T-cell (primary cell): ENCODE measurements at regions of chr1 and their contacts with region 1.

Region 1: GRCh38 chr1:18972531-18972930 is 16.1 kb upstream of the IFFO2 start:
- DNase-seq: peak in 16 of 35 experiments; percentile 9 to 71 (median 30)
- ATAC-seq: peak; percentile 20 to 64 (median 52)
- H3K4me3 ChIP-seq: no peak overlapping the region
- H3K4me3 Mint-ChIP-seq: no peak overlapping the region
- H3K27ac ChIP-seq: no peak overlapping the region
- H3K27ac Mint-ChIP-seq: no peak overlapping the region
- H3K4me1 ChIP-seq: no peaks in the 10 kb centered on the region
- H3K4me1 Mint-ChIP-seq: peaks cover 0 to 5% (median 4%) of the 10 kb centered on the region in 3 donors
- H3K27me3 ChIP-seq: peaks cover 0 to 12% of the 10 kb centered on the region in 2 experiments
- H3K27me3 Mint-ChIP-seq: peaks cover 8 to 18% of the 10 kb centered on the region in 2 donors

Region 2: GRCh38 chr1:18883636-18884418 is 88.7 kb before region 1 on chr1:
- CTCF ChIA-PET with region 1: interaction called, 7 to 17 read pairs
- POLR2A ChIA-PET with region 1: no interaction called
- DNase-seq: peak; percentile 19 to 80 (median 64)
- ATAC-seq: peak; percentile 68 to 75 (median 73)
- H3K4me3 ChIP-seq: no peak overlapping the region
- H3K4me3 Mint-ChIP-seq: no peak overlapping the region
- H3K27ac ChIP-seq: no peak overlapping the region
- H3K27ac Mint-ChIP-seq: no peak overlapping the region
- H3K4me1 ChIP-seq: no peaks in the 10 kb centered on the region
- H3K4me1 Mint-ChIP-seq: no peaks in the 10 kb centered on the region
- H3K27me3 ChIP-seq: no peaks in the 10 kb centered on the region
- H3K27me3 Mint-ChIP-seq: no peaks in the 10 kb centered on the region

Region 3: DNA sequence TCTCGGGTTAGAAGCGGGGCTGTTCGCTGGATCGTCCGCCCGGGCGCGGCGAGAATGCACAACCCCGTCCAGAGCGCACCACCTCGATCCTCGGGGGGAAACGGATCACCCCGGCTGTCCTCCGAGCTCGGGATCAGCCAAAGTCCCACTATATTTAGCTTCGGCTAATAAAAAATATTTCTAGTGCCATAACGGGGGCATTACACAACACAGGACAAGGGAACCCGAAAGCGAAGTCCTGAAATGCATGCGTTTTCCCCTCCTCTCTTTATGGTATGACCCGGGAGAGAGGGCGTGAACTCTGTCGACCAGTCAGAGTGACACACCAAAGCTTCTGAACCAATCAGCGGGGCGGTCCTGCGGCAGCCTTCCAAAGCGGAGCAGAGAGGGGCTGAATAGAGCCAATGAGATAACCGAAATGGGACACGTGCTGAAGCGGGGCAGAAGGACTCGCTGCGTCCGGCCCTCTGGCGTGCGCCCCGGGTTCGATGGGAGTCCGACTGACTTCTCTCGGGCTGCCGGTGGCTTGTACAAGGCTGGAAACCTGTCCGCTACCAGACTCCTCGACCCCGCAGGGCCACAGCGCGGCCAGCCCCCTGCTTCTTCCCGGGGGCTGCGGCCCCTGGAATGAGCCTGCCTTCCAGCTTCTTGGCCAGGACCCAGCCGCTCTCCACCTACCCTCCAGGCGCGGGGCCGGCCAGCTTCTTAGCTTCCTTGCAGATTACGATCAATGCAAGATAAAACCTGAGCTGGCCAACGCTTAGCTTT is 69.8 kb before region 1 on chr1 and contains the start of gene ALDH4A1:
- CTCF ChIA-PET with region 1: interaction called, 11 to 26 read pairs
- POLR2A ChIA-PET with region 1: no interaction called
- DNase-seq: peak; percentile 79 to 97 (median 92)
- ATAC-seq: peak; percentile 95 to 98 (median 97)
- H3K4me3 ChIP-seq: peak within 1 kb of the TSS; percentile 75 to 77
- H3K4me3 Mint-ChIP-seq: peak within 1 kb of the TSS; percentile 88 to 91 (median 88)
- H3K27ac ChIP-seq: peak within 1 kb of the TSS; percentile 75
- H3K27ac Mint-ChIP-seq: peak within 1 kb of the TSS; percentile 96 to 99
- H3K4me1 ChIP-seq: peaks cover 16 to 33% of the 10 kb centered on the region in 2 experiments
- H3K4me1 Mint-ChIP-seq: peaks cover 30 to 47% (median 36%) of the 10 kb centered on the region in 3 donors
- H3K27me3 ChIP-seq: no peaks in the 10 kb centered on the region
- H3K27me3 Mint-ChIP-seq: no peaks in the 10 kb centered on the region
- total RNA-seq, gene ALDH4A1: 0.85 to 2.8 (median 2.2) TPM

Region 4: GRCh38 chr1:18991585-18991984 is 19.1 kb after region 1 on chr1:
- CTCF ChIA-PET with region 1: no interaction called
- POLR2A ChIA-PET with region 1: no interaction called
- DNase-seq: no peak
- ATAC-seq: no peak
- H3K4me3 ChIP-seq: no peak overlapping the region
- H3K4me3 Mint-ChIP-seq: no peak overlapping the region
- H3K27ac ChIP-seq: no peak overlapping the region
- H3K27ac Mint-ChIP-seq: no peak overlapping the region
- H3K4me1 ChIP-seq: no peaks in the 10 kb centered on the region
- H3K4me1 Mint-ChIP-seq: no peaks in the 10 kb centered on the region
- H3K27me3 ChIP-seq: peaks cover 0 to 16% of the 10 kb centered on the region in 2 experiments
- H3K27me3 Mint-ChIP-seq: peaks cover 2 to 5% of the 10 kb centered on the region in 2 donors

Region 5: DNA sequence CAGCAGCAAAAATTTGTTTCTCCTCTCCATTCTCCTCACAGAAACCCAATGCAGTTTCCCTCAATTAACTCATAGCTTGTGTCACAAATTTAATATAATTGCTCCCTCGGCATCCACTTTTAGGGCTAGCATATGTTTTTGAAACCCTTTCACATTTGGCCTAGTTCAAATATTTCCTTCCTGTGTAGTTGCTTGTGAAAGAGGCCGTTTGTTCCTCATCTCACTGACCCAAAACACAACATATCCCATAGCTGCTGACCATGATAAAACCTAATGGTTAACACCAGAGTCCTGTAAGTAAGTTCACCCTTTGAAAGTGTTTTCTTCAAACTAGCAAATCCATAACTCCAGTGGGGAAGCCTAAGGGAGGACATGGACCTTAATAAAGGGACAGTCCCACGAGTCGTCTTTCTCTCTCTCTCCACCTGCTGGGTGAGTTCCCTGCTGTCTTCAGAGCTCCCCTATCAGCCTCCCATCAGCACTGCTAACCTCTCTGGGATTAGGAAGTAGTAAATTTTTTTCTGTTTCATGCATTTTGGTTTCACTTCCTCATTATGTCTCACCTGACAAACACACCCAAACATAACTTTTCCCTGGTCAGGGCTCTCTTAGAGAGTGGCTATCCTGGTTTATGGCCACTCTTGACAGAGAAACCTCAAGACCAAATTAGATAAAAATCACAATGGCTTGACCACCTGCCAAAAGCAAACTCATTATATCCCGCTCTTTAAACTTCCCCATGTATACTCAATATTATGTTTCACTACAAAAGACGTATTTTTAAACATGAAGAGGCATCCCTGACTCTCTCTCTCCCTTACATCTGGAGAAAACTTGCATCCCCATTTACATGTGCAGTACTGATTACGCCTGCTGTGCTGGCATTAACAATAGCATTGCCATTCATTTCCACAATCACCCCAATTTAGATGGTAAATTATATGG is 1992.3 kb after region 1 on chr1:
- CTCF ChIA-PET with region 1: no interaction called
- POLR2A ChIA-PET with region 1: no interaction called
- DNase-seq: no peak
- ATAC-seq: no peak
- H3K4me3 ChIP-seq: no peak overlapping the region
- H3K4me3 Mint-ChIP-seq: no peak overlapping the region
- H3K27ac ChIP-seq: no peak overlapping the region
- H3K27ac Mint-ChIP-seq: no peak overlapping the region
- H3K4me1 ChIP-seq: no peaks in the 10 kb centered on the region
- H3K4me1 Mint-ChIP-seq: peaks cover 0 to 14% (median 10%) of the 10 kb centered on the region in 3 donors
- H3K27me3 ChIP-seq: no peaks in the 10 kb centered on the region
- H3K27me3 Mint-ChIP-seq: no peaks in the 10 kb centered on the region